ENCODE measurements at regions of chr10 and their contacts with region 1.

Region 1: DNA sequence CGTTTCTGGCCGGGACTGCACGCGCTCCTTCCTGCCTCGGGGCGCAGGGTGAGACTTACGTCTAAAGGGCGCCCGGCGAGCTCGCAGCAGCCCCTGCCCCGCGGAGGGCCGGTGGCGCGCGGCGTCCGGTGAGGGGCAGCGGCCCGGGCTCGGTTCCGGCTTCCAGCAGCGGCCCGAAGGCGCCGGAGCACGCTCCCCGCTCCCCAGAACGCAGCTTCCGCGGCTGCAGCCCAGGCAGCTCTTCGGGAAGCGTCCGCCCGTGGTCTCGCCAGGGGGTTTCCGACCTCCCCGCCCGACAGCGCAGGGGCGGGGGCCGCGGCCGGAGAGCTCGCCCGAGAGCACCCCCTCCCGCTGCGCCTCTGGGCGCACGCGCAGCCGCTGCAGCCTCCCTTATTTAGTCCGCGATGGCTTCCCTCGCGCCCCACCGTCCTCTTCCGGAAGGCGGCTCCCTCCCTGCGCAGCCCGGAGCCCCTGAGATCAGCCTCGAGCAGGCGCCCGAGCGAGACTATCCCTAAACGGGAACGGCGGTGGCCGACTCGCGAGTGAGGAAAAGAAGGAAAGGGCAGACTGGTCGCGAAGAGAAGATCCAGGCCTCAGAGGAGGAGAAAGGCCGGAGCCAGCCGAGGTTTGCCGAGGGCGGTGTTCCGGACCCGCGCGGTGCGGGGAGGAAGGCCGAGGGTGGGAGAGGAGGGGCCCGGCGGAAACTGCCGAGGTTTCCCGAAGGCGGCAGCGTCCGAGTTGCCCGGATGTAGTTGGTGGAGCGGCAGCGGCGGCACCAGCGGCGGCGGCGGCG is at the start of gene WAC:
- DNase-seq: peak; percentile 98
- H3K4me3 Mint-ChIP-seq: peak within 1 kb of the TSS; percentile 98
- H3K27ac Mint-ChIP-seq: peak within 1 kb of the TSS; percentile 100
- H3K4me1 Mint-ChIP-seq: peaks cover 45% of the 10 kb centered on the region
- H3K27me3 Mint-ChIP-seq: no peaks in the 10 kb centered on the region
- total RNA-seq, gene WAC: 92.9 to 93.1 TPM

Region 2: GRCh38 chr10:27155066-27155754 is 1377.4 kb before region 1 on chr10 and contains the start of gene MASTL:
- CTCF ChIA-PET with region 1: no interaction called
- POLR2A ChIA-PET with region 1: no interaction called
- intact Hi-C with region 1: loop called (anchors 5 kb)
- DNase-seq: peak; percentile 96
- H3K4me3 Mint-ChIP-seq: peak within 1 kb of the TSS; percentile 97
- H3K27ac Mint-ChIP-seq: peak within 1 kb of the TSS; percentile 100
- H3K4me1 Mint-ChIP-seq: peaks cover 39% of the 10 kb centered on the region
- H3K27me3 Mint-ChIP-seq: no peaks in the 10 kb centered on the region
- total RNA-seq, gene MASTL: 44.2 to 50.4 TPM

Region 3: DNA sequence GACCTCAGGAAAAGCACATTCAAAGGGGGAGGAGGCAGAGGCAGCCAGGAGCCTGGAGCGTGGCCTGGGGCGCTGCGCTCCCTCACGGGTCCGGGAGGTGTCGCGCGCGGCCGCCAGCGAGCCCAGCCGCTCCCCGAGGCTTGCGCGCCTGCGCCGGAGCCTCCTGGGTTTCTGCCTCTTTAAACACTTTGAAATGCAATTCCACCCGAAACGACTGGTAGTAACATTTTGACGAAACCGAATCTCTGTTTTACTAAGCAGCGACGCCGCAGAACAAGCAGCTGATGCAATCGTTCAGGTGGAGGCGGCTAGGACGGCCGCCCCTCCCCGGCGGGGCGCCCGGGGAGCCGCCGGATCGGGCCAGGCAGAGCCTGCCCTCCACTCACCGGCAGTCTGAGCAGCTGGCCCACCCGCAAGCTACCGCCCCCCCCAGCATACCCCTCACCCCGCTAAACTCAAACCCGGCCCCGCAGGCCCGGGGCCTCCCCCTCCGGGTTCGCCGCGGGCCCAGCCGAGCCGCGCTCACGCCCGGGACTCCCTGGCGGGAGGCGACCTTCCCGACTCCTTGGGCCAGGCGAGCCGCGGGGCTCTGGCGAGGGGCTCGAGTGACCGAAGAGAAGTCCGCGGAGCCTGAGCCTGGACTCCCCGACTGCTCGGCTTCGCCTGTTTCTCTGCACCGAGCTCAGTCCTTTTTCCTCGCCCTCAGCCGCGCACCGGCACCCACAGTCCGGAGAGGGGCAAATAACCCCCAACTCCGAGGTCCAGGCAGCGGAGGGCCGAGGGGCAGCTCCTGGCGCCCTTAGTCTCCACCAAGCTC is 790.2 kb before region 1 on chr10:
- CTCF ChIA-PET with region 1: no interaction called
- POLR2A ChIA-PET with region 1: no interaction called
- intact Hi-C with region 1: loop called (anchors 5 kb)
- DNase-seq: peak; percentile 91
- H3K4me3 Mint-ChIP-seq: peak overlapping the region; percentile 74
- H3K27ac Mint-ChIP-seq: no peak overlapping the region
- H3K4me1 Mint-ChIP-seq: peaks cover 39% of the 10 kb centered on the region
- H3K27me3 Mint-ChIP-seq: peaks cover 49% of the 10 kb centered on the region

Region 4: GRCh38 chr10:28432210-28432676 is 100.3 kb before region 1 on chr10:
- CTCF ChIA-PET with region 1: no interaction called
- POLR2A ChIA-PET with region 1: interaction called, 3 read pairs
- intact Hi-C with region 1: loop called (anchors 1 kb)
- DNase-seq: peak; percentile 27
- H3K4me3 Mint-ChIP-seq: no peak overlapping the region
- H3K27ac Mint-ChIP-seq: no peak overlapping the region
- H3K4me1 Mint-ChIP-seq: peaks cover 5% of the 10 kb centered on the region
- H3K27me3 Mint-ChIP-seq: peaks cover 3% of the 10 kb centered on the region

Region 5: GRCh38 chr10:28520346-28520745 is 12.2 kb before region 1 on chr10:
- CTCF ChIA-PET with region 1: no interaction called
- POLR2A ChIA-PET with region 1: no interaction called
- intact Hi-C with region 1: no loop called
- DNase-seq: no peak
- H3K4me3 Mint-ChIP-seq: no peak overlapping the region
- H3K27ac Mint-ChIP-seq: no peak overlapping the region
- H3K4me1 Mint-ChIP-seq: no peaks in the 10 kb centered on the region
- H3K27me3 Mint-ChIP-seq: no peaks in the 10 kb centered on the region

Region 6: DNA sequence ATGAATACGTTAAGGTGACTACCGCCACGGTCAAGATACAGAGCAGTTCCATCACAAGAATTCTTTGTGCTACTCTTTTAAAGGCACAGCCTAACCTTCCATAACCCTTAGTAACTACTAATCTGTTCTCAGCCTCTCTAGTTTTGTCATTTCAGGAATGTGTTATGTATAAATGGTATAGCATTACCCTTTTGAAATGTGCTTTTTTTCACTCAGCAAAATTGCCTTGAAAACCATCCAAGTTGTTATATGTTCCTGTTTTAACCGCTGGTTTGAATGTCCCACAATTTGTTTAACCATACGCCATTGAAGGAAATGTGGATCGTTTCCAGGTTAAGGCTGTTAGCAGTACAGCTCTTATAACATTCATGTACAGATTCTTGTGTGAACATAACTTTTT is 32.3 kb after region 1 on chr10:
- CTCF ChIA-PET with region 1: no interaction called
- POLR2A ChIA-PET with region 1: interaction called, 5 read pairs
- intact Hi-C with region 1: loop called (anchors 2 kb)
- DNase-seq: no peak
- H3K4me3 Mint-ChIP-seq: no peak overlapping the region
- H3K27ac Mint-ChIP-seq: peak overlapping the region; percentile 20
- H3K4me1 Mint-ChIP-seq: peaks cover 80% of the 10 kb centered on the region
- H3K27me3 Mint-ChIP-seq: no peaks in the 10 kb centered on the region

Region 7: DNA sequence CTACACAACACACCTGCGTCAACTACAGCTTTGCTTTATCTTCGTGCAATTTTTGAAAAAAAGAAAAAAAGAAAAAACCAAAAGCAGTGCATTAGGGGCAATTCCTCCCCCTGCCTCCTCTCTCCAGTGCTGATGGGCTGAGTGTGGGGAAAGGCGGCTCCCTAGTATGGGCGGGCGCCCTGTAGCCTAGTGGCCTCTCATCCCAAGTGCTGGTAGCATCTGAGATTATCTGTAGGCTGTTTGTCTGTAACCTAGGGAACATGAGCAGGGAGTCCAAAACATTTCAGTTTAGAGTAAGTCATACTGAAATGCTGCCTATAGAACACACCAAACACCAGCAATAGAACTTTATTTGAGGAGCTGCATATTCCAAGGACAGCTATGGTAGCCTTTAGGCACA is 120.1 kb after region 1 on chr10:
- CTCF ChIA-PET with region 1: no interaction called
- POLR2A ChIA-PET with region 1: no interaction called
- intact Hi-C with region 1: no loop called
- DNase-seq: no peak
- H3K4me3 Mint-ChIP-seq: no peak overlapping the region
- H3K27ac Mint-ChIP-seq: no peak overlapping the region
- H3K4me1 Mint-ChIP-seq: no peaks in the 10 kb centered on the region
- H3K27me3 Mint-ChIP-seq: peaks cover 9% of the 10 kb centered on the region

Region 8: DNA sequence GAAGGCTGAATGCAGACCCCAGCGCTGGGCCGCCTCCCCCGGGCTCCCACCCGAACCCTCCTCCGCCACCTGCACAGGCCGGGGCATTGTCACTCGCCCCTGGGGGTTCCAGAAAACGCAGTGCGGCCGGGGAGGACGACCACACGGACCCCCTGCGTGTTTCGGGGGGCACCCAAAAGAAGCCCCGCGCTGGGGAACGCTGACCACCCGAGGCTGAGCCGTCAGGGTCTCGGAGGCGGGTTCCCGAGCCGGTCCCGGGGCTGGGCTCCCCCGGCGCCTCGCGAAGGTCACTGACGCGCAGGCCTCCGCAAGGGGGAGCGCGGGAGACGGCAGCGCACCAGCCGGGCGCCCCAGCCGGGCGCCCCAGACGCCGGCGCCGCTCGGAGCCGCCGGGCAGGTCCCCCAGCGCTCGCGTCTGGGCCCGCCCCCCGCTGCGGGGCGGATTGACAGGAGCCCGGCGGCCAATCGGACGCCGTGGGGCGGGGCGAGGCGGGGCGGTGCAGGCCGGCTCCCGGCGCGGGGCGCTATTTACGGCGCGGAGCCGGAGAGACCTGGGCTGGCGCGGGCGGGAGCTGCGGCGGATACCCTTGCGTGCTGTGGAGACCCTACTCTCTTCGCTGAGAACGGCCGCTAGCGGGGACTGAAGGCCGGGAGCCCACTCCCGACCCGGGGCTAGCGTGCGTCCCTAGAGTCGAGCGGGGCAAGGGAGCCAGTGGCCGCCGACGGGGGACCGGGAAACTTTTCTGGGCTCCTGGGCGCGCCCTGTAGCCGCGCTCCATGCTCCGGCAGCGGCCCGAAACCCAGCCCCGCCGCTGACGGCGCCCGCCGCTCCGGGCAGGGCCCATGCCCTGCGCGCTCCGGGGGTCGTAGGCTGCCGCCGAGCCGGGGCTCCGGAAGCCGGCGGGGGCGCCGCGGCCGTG is 144.6 kb after region 1 on chr10 and contains the start of gene BAMBI:
- CTCF ChIA-PET with region 1: no interaction called
- POLR2A ChIA-PET with region 1: no interaction called
- intact Hi-C with region 1: loop called (anchors 1 kb)
- DNase-seq: peak; percentile 91
- H3K4me3 Mint-ChIP-seq: peak within 1 kb of the TSS; percentile 71
- H3K27ac Mint-ChIP-seq: no peak within 1 kb of the TSS
- H3K4me1 Mint-ChIP-seq: peaks cover 26% of the 10 kb centered on the region
- H3K27me3 Mint-ChIP-seq: peaks cover 48% of the 10 kb centered on the region
- total RNA-seq, gene BAMBI: 0.31 to 0.33 TPM

Measured in activated CD4-positive, alpha-beta memory T cell treated with anti-CD3 and anti-CD28 coated beads for 36 hours (primary cell).